ENCODE measurements at regions of chr7 and their contacts with region 1.

Region 1: DNA sequence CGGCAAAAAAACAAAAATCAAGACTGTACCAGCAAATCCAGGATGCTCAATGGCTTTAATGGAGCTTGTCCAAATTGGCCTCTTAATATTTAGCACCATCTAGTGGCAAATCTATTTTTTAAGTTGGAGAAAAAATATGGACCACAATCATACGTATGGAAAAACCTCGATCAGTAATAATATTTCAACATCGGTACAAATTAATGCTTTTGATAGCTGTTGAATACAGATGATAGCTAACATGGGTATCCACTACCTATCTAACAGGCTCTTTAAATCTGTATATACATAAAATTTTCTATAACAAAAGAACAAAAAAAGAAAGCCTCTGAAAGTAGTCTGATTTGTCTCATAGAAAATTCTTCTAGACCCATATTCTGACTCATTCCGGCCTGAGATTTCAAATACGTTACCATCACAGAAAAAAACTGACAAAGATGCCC is 29.2 kb downstream of the COA1 start:
- DNase-seq: peak; percentile 31
- ATAC-seq: peak; percentile 60
- H3K4me3 ChIP-seq: no peak overlapping the region
- H3K27ac ChIP-seq: no peak overlapping the region
- H3K4me1 ChIP-seq: peaks cover 6 to 14% of the 10 kb centered on the region in 2 experiments
- H3K27me3 ChIP-seq: no peaks in the 10 kb centered on the region
- CTCF ChIP-seq: peak; percentile 57 to 95 (median 68)
- POLR2A ChIP-seq: no peak
- RAD21 ChIP-seq: peak; percentile 91

Region 2: GRCh38 chr7:43417455-43417854 is 282.6 kb before region 1 on chr7:
- CTCF ChIA-PET with region 1: no interaction called
- POLR2A ChIA-PET with region 1: no interaction called
- RAD21 ChIA-PET with region 1: no interaction called
- intact Hi-C with region 1: no loop called
- DNase-seq: no peak
- ATAC-seq: no peak
- H3K4me3 ChIP-seq: no peak overlapping the region
- H3K27ac ChIP-seq: no peak overlapping the region
- H3K4me1 ChIP-seq: no peaks in the 10 kb centered on the region
- H3K27me3 ChIP-seq: no peaks in the 10 kb centered on the region
- CTCF ChIP-seq: no peak
- POLR2A ChIP-seq: no peak
- RAD21 ChIP-seq: no peak

Region 3: GRCh38 chr7:43686991-43687390 is 13.1 kb before region 1 on chr7:
- CTCF ChIA-PET with region 1: interaction called, 10 read pairs
- POLR2A ChIA-PET with region 1: no interaction called
- RAD21 ChIA-PET with region 1: no interaction called
- intact Hi-C with region 1: no loop called
- DNase-seq: no peak
- ATAC-seq: no peak
- H3K4me3 ChIP-seq: no peak overlapping the region
- H3K27ac ChIP-seq: no peak overlapping the region
- H3K4me1 ChIP-seq: peaks cover 0 to 6% of the 10 kb centered on the region in 2 experiments; a peak in 1 of 4 replicates
- H3K27me3 ChIP-seq: no peaks in the 10 kb centered on the region
- CTCF ChIP-seq: no peak
- POLR2A ChIP-seq: no peak
- RAD21 ChIP-seq: no peak

Region 4: DNA sequence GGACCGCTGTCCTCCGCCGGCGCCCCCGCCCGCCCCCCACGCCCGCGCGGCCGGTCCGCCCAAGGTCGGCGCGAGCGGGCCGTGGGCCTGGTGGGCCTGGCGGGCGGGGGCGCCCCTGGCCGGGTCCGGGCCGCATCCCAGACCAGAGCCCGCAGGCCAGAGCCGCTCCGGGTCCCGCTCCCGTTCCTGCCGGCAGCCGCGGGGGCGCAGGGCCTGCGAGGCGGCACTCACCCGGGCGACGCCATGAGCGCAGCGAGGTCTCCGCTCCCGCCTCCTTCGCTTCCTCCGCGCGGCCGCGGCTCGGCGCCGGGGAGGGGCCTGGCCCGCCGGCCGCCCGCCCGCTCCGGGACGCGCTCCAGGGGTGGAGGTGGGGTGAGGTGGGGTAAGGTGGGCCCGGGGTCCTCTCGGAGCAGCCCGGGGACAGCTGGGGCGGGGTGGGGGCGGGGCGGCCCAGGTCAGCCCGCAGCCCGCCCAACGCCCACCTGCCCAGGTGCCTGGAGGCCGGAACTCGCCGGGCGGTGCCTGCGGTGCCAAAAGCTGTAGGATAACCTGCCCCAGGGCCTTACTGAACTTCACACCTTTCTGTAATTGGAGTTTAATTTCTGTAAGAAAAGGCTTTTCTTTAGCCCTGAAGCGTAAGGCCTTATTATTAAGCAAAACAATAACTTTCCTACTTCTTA is 206.4 kb after region 1 on chr7 and contains the start of gene URGCP:
- CTCF ChIA-PET with region 1: no interaction called
- POLR2A ChIA-PET with region 1: no interaction called
- RAD21 ChIA-PET with region 1: no interaction called
- intact Hi-C with region 1: no loop called
- DNase-seq: no peak
- ATAC-seq: peak; percentile 81
- H3K4me3 ChIP-seq: peak within 1 kb of the TSS; percentile 75 to 80
- H3K27ac ChIP-seq: peak within 1 kb of the TSS; percentile 76
- H3K4me1 ChIP-seq: peaks cover 13 to 24% of the 10 kb centered on the region in 2 experiments
- H3K27me3 ChIP-seq: no peaks in the 10 kb centered on the region
- CTCF ChIP-seq: no peak
- POLR2A ChIP-seq: peak; percentile 51
- RAD21 ChIP-seq: no peak
- total RNA-seq, gene URGCP: 28.0 TPM